Right cardiac atrium (tissue), 5 donors: ENCODE measurements at regions of chr20 and their contacts with region 1.

Region 1: DNA sequence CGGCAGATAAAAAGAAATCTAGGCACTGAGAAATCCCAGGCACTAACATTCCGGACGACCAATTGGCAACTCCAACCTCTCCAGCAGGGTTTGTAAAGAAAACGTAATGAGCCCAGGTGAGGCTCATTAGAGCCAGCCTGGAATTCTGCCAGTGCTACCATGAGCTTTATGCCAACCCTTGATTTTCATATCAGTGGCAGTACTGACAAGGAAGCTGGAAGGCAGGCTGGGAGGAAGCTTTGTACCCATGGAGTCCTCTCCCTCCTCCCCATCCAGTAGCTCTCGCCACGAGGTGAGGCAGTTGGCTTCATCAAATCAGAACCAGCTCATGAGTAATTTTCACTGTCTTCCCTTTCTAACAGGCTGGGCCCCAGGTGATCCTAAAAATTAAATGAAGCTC is 250.2 kb downstream of the ZNF217 start:
- DNase-seq: no peak
- ATAC-seq: no peak
- H3K4me3 ChIP-seq: no peak overlapping the region
- H3K27ac ChIP-seq: no peak overlapping the region
- H3K4me1 ChIP-seq: no peaks in the 10 kb centered on the region
- H3K27me3 ChIP-seq: no peaks in the 10 kb centered on the region

Region 2: DNA sequence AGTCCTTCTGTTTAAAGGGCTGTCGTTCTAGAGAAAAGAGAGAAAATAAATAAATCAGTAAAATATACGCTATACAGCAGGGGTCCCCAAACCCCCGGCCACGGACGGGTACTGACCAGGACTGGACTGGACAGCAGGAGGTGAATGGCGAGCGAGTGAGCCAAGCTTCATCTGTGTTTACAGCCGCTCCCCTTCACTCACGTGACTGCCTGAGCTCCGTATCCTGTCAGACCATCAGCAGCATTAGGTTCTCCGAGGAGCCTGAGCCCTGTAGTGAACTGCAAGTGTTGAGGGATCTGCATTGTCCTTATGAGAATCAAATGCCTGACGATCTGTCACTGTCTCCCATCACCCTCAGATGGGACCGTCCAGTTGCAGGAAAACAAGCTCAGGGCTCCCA is 173.7 kb after region 1 on chr20:
- intact Hi-C with region 1: loop called in 1 of 4 experiments (anchors 5 kb)
- DNase-seq: no peak
- ATAC-seq: no peak
- H3K4me3 ChIP-seq: no peak overlapping the region
- H3K27ac ChIP-seq: no peak overlapping the region
- H3K4me1 ChIP-seq: no peaks in the 10 kb centered on the region
- H3K27me3 ChIP-seq: no peaks in the 10 kb centered on the region